Activated naive CD4-positive, alpha-beta T cell treated with anti-CD3 and anti-CD28 coated beads for 36 hours (primary cell): ENCODE measurements at regions of chr12 and their contacts with region 1.

Region 1: GRCh38 chr12:11836282-11837151 is 187.0 kb downstream of the ETV6 start:
- DNase-seq: peak; percentile 92
- H3K4me3 Mint-ChIP-seq: no peak overlapping the region
- H3K27ac Mint-ChIP-seq: peak overlapping the region; percentile 97
- H3K4me1 Mint-ChIP-seq: peaks cover 68% of the 10 kb centered on the region
- H3K27me3 Mint-ChIP-seq: no peaks in the 10 kb centered on the region

Region 2: DNA sequence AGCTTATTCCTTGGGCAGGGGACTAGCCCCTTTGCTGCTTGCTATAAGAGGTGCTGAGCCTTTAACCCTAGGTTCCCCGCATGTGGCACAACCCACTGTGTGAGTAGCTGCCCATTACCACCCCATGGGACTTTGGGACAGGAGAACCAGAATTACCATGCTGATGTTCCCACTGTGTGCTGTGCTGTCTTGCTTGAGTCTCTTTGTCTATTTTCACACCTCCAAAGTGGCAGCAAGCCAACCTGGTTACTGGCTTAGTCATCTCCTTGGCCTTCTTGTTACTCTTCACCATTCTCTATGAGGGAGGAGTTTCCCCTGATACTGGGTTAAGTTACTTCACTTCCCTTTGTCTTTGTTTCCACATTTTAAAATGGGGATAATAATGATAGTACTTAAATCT is 260.4 kb before region 1 on chr12:
- CTCF ChIA-PET with region 1: interaction called, 5 read pairs
- intact Hi-C with region 1: loop called (anchors 1 kb)
- DNase-seq: peak; percentile 87
- H3K4me3 Mint-ChIP-seq: no peak overlapping the region
- H3K27ac Mint-ChIP-seq: no peak overlapping the region
- H3K4me1 Mint-ChIP-seq: peaks cover 19% of the 10 kb centered on the region
- H3K27me3 Mint-ChIP-seq: peaks cover 2% of the 10 kb centered on the region

Region 3: GRCh38 chr12:11812586-11813427 is 23.7 kb before region 1 on chr12:
- CTCF ChIA-PET with region 1: no interaction called
- intact Hi-C with region 1: loop called (anchors 1 kb)
- DNase-seq: peak; percentile 39
- H3K4me3 Mint-ChIP-seq: peak overlapping the region; percentile 51
- H3K27ac Mint-ChIP-seq: peak overlapping the region; percentile 32
- H3K4me1 Mint-ChIP-seq: peaks cover 55% of the 10 kb centered on the region
- H3K27me3 Mint-ChIP-seq: no peaks in the 10 kb centered on the region

Region 4: GRCh38 chr12:11877869-11878780 is 41.6 kb after region 1 on chr12:
- CTCF ChIA-PET with region 1: interaction called, 3 read pairs
- intact Hi-C with region 1: loop called (anchors 1 kb)
- DNase-seq: peak; percentile 26
- H3K4me3 Mint-ChIP-seq: no peak overlapping the region
- H3K27ac Mint-ChIP-seq: no peak overlapping the region
- H3K4me1 Mint-ChIP-seq: peaks cover 47% of the 10 kb centered on the region
- H3K27me3 Mint-ChIP-seq: no peaks in the 10 kb centered on the region

Region 5: GRCh38 chr12:11981121-11981733 is 144.7 kb after region 1 on chr12:
- CTCF ChIA-PET with region 1: no interaction called
- intact Hi-C with region 1: loop called (anchors 1 kb)
- DNase-seq: peak; percentile 72
- H3K4me3 Mint-ChIP-seq: no peak overlapping the region
- H3K27ac Mint-ChIP-seq: peak overlapping the region; percentile 98
- H3K4me1 Mint-ChIP-seq: peaks cover 51% of the 10 kb centered on the region
- H3K27me3 Mint-ChIP-seq: no peaks in the 10 kb centered on the region

Region 6: DNA sequence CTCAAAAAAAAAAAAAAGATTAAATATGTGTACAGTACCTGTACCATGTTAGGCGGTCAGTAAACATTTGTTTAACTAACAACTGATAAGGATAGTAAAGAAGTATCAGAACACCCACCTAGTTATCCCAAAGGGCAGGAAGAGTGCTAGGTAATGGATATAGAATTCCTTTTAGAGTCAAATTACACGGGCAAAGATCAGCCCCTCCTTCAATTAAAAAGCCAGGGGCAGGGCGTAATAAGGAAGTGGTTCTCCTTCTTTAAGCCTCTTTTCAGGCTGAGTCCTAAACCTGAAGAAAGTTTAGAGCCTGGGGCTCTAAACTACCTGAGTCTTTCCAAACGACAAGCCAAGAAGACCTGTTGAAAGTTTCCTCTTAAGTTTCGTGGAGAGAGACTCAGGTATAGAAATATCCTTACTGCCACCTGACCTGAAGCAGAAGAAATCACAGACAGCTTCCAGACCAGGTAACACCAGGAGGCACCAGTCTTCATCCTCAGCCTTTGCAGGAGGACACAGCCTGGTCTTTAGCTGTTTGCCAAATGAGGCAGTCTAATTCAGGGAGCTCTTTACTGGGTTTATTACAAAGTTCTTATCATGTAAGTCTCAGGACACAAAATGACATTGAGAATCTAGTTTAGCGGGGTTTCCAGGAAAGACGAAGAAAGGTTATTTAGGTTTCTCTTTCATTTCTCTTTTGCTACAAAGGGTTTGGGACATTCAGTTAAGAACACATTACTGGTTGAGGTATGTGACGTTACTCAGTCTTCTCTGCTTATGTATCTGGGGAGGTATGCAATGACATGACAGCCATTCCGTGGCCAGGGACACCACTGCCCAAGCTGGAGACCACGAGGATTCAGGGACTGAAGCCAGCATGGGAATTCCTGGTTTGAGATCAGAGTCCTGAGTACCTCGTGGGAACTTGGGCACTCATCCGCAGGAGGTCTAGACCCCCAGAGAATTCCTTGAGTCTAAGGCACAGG is 234.4 kb after region 1 on chr12 and contains the start of gene BCL2L14:
- CTCF ChIA-PET with region 1: no interaction called
- intact Hi-C with region 1: loop called (anchors 1 kb)
- DNase-seq: peak; percentile 52
- H3K4me3 Mint-ChIP-seq: peak within 1 kb of the TSS; percentile 85
- H3K27ac Mint-ChIP-seq: peak within 1 kb of the TSS; percentile 90
- H3K4me1 Mint-ChIP-seq: peaks cover 36% of the 10 kb centered on the region
- H3K27me3 Mint-ChIP-seq: no peaks in the 10 kb centered on the region
- total RNA-seq, gene BCL2L14: 19.4 to 21.8 TPM